Ascending aorta (tissue), 2 donors: ENCODE measurements at regions of chr12 and their contacts with region 1.

Region 1: GRCh38 chr12:30754709-30755394 is at the start of gene CAPRIN2:
- DNase-seq: peak; percentile 82 to 98
- H3K4me3 ChIP-seq: peak within 1 kb of the TSS; percentile 87 to 100
- H3K27ac ChIP-seq: peak within 1 kb of the TSS; percentile 83 to 84
- H3K4me1 ChIP-seq: peaks cover 0 to 6% of the 10 kb centered on the region in 2 donors
- H3K27me3 ChIP-seq: no peaks in the 10 kb centered on the region
- CTCF ChIP-seq: peak; percentile 30 to 49 (median 44)
- total RNA-seq, gene CAPRIN2: 20.6 TPM

Region 2: GRCh38 chr12:30695199-30696103 is 59.4 kb before region 1 on chr12 and contains the start of gene IPO8:
- intact Hi-C with region 1: loop called (anchors 1 kb)
- DNase-seq: peak; percentile 77 to 95
- H3K4me3 ChIP-seq: peak within 1 kb of the TSS; percentile 81 to 95
- H3K27ac ChIP-seq: peak within 1 kb of the TSS; percentile 62 to 68
- H3K4me1 ChIP-seq: peaks cover 10 to 11% of the 10 kb centered on the region in 2 donors
- H3K27me3 ChIP-seq: no peaks in the 10 kb centered on the region
- CTCF ChIP-seq: peak in 1 of 3 experiments; percentile 20
- total RNA-seq, gene IPO8: 79.7 TPM

Region 3: GRCh38 chr12:30795410-30796312 is 40.8 kb after region 1 on chr12:
- intact Hi-C with region 1: loop called (anchors 1 kb)
- DNase-seq: peak in 1 of 2 donors; percentile 89
- H3K4me3 ChIP-seq: peak overlapping the region; percentile 66 to 76
- H3K27ac ChIP-seq: peak overlapping the region; percentile 68 to 75
- H3K4me1 ChIP-seq: peaks cover 5 to 9% of the 10 kb centered on the region in 2 donors
- H3K27me3 ChIP-seq: no peaks in the 10 kb centered on the region
- CTCF ChIP-seq: no peak

Region 4: GRCh38 chr12:31325877-31326631 is 571.2 kb after region 1 on chr12 and contains the start of gene SINHCAF:
- intact Hi-C with region 1: loop called (anchors 10 kb)
- DNase-seq: peak; percentile 99 to 100
- H3K4me3 ChIP-seq: peak within 1 kb of the TSS; percentile 86 to 91
- H3K27ac ChIP-seq: peak within 1 kb of the TSS; percentile 81 to 84
- H3K4me1 ChIP-seq: no peaks in the 10 kb centered on the region
- H3K27me3 ChIP-seq: no peaks in the 10 kb centered on the region
- CTCF ChIP-seq: no peak
- total RNA-seq, gene SINHCAF: 10.9 TPM